Heart left ventricle (tissue), 16 donors: ENCODE measurements at regions of chr1 and their contacts with region 1.

Region 1: GRCh38 chr1:231757101-231757404 is 130.5 kb downstream of the DISC1 start:
- DNase-seq: no peak
- ATAC-seq: peak in 2 of 4 donors; percentile 18 to 34
- H3K4me3 ChIP-seq: no peak overlapping the region
- H3K27ac ChIP-seq: no peak overlapping the region
- H3K4me1 ChIP-seq: peaks cover 0 to 8% (median 0%) of the 10 kb centered on the region in 12 donors
- H3K27me3 ChIP-seq: no peaks in the 10 kb centered on the region
- CTCF ChIP-seq: peak in 1 of 12 donors; percentile 11
- POLR2A ChIP-seq: no peak

Region 2: DNA sequence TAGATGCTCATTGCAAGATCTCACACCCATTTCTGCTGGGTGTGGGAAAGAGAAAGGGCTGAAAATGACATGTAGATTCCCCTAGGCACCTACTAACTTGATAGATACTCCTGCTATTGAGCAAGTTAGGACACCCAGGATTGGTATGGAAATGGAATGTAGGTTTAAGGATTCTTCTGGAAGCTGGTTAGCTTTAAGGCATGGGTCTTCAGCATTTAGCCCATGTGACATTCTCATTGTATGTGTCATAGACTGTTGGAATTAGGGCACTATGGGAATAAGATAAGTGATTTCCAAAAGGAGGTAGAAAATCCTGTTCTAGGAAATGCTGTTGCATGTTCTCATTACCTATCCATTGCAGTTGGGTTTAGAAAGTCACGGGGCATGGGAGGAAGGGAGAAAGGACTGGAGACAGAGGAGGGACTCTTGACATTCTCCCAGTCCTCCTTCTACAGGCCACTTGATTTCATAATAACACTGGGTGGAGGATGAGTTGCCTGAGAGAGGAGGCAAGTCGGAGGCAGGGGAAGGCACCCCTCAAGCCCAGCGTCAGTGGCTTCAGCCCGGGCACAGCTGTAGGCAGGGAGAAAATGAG is 54.2 kb before region 1 on chr1:
- intact Hi-C with region 1: no loop called
- DNase-seq: no peak
- ATAC-seq: no peak
- H3K4me3 ChIP-seq: no peak overlapping the region
- H3K27ac ChIP-seq: no peak overlapping the region
- H3K4me1 ChIP-seq: peaks cover 0 to 23% (median 8%) of the 10 kb centered on the region in 12 donors
- H3K27me3 ChIP-seq: no peaks in the 10 kb centered on the region
- CTCF ChIP-seq: no peak
- POLR2A ChIP-seq: no peak

Region 3: DNA sequence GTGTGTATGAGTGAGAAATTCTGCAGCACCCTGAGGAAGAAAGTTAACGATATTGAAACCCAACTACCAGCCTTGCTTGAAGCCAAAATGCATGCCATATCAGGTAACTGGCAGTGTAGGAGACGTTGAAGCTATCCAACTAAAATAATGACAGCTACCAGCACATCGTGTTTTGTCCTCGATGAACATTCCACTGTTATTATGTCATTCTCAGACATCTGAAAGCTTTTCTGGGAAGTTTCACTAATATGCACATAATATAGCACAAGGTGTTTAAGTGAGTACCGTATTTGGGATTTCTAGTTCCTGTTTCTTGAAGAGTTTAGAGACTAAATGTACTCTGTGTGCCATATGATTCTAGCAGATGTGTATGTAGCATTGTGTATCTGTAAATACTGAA is 43.1 kb after region 1 on chr1:
- intact Hi-C with region 1: loop called in 6 of 10 experiments (anchors 2 to 10 kb)
- DNase-seq: no peak
- ATAC-seq: no peak
- H3K4me3 ChIP-seq: no peak overlapping the region
- H3K27ac ChIP-seq: no peak overlapping the region
- H3K4me1 ChIP-seq: peaks cover 0 to 7% (median 0%) of the 10 kb centered on the region in 12 donors
- H3K27me3 ChIP-seq: no peaks in the 10 kb centered on the region
- CTCF ChIP-seq: no peak
- POLR2A ChIP-seq: no peak

Region 4: GRCh38 chr1:231806623-231807495 is 49.8 kb after region 1 on chr1:
- intact Hi-C with region 1: loop called in 7 of 10 experiments (anchors 2 to 10 kb)
- DNase-seq: peak; percentile 38 to 77 (median 54)
- ATAC-seq: peak; percentile 64 to 83 (median 74)
- H3K4me3 ChIP-seq: no peak overlapping the region
- H3K27ac ChIP-seq: no peak overlapping the region
- H3K4me1 ChIP-seq: peaks cover 0 to 27% (median 8%) of the 10 kb centered on the region in 12 donors
- H3K27me3 ChIP-seq: no peaks in the 10 kb centered on the region
- CTCF ChIP-seq: peak; percentile 36 to 61 (median 52)
- POLR2A ChIP-seq: no peak

Region 5: GRCh38 chr1:231853588-231854207 is 96.6 kb after region 1 on chr1:
- intact Hi-C with region 1: loop called in 1 of 10 experiments (anchors 10 kb)
- DNase-seq: peak in 4 of 5 donors; percentile 36 to 84 (median 64)
- ATAC-seq: peak; percentile 53 to 62 (median 57)
- H3K4me3 ChIP-seq: no peak overlapping the region
- H3K27ac ChIP-seq: peak overlapping the region in 3 of 12 donors; percentile 20 to 47 (median 39)
- H3K4me1 ChIP-seq: peaks cover 0 to 33% (median 18%) of the 10 kb centered on the region in 12 donors
- H3K27me3 ChIP-seq: no peaks in the 10 kb centered on the region
- CTCF ChIP-seq: no peak
- POLR2A ChIP-seq: no peak

Region 6: DNA sequence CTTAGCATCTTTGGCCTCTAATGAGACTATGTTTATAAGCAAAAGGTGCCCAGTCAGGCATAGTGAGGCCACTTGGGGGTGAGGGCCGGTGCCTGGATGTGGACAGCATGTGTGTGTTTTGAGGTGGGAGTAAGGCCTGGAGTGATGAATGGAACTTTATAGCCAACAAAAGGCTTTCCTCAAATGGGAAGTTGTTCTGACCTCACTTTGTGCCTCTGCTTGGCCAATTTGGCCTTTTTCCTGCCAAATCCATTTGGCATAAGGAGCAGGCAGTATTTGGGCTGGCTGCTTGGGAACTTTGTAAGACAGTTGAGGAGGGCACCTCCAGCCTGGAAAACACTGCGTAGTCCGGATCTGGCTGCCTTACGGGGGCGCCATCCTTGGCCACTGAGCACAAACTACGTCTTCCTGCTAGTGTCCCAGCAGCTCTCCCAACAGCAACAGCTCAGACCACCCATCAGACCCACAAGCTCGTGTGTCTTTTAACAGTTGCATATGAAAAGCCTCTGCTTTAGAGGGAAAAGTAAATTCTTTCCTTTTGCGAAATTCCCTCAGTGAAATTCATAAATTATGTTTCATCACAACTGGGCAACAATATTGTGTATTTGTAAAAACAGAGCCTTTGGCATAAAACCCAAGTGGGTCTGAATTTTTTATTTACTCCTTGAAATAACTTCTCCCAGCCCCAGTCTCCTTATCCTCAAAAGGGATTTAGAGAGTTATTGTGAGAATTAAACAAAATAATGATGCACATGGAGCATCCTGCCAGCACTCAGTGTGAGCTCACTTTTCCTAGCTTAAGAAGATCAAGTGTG is 192.4 kb after region 1 on chr1:
- intact Hi-C with region 1: no loop called
- DNase-seq: peak in 1 of 5 donors; percentile 35
- ATAC-seq: peak in 3 of 4 donors; percentile 61 to 83 (median 71)
- H3K4me3 ChIP-seq: no peak overlapping the region
- H3K27ac ChIP-seq: peak overlapping the region in 8 of 12 donors; percentile 2 to 54 (median 30)
- H3K4me1 ChIP-seq: peaks cover 0 to 12% (median 4%) of the 10 kb centered on the region in 12 donors
- H3K27me3 ChIP-seq: no peaks in the 10 kb centered on the region
- CTCF ChIP-seq: no peak
- POLR2A ChIP-seq: no peak

Region 7: GRCh38 chr1:232319072-232319471 is 562.0 kb after region 1 on chr1:
- intact Hi-C with region 1: loop called in 1 of 10 experiments (anchors 10 kb)
- DNase-seq: peak; percentile 87 to 95 (median 89)
- ATAC-seq: peak; percentile 95 to 96 (median 96)
- H3K4me3 ChIP-seq: no peak overlapping the region
- H3K27ac ChIP-seq: peak overlapping the region in 11 of 12 donors; percentile 5 to 95 (median 79)
- H3K4me1 ChIP-seq: peaks cover 0 to 17% (median 11%) of the 10 kb centered on the region in 12 donors
- H3K27me3 ChIP-seq: no peaks in the 10 kb centered on the region
- CTCF ChIP-seq: no peak
- POLR2A ChIP-seq: no peak